ENCODE measurements at regions of chrX and their contacts with region 1.

Region 1: GRCh38 chrX:54891573-54891972 is 29.1 kb upstream of the TRO start:
- DNase-seq: peak in 1 of 2 donors; percentile 32
- ATAC-seq: peak; percentile 72

Region 2: DNA sequence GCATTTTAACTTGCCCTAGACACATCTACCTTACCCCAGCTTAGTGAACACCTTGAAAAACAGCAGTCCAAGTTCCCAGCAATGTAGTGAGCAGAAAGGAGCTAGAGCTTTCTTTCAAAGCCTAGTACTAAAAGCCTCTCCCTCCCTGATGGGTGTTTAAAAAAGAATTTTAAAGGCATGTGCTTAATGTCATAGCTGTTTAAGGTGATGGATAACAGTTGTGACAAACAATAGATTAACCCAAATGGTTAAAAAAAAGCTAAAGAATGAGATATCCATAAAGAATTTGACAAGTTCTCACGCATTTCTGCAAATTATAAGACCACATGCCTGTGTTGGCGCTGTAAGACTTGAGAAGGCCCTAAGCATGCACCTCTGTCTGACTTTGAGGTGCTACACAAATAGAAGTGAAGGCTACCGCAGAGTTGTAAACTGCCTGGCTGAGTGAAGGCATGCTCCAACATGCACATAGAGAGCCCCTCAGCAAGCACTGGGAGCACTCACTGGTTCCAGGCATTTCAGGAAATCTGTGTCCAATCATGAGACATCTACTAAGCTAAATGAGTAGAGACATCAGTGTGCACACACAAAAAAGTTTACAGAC is 941.3 kb before region 1 on chrX:
- intact Hi-C with region 1: no loop called
- DNase-seq: no peak
- ATAC-seq: no peak

Region 3: GRCh38 chrX:55057675-55058249 is 166.2 kb after region 1 on chrX:
- intact Hi-C with region 1: loop called in 1 of 2 experiments (anchors 10 kb)
- DNase-seq: peak in 1 of 2 donors; percentile 13
- ATAC-seq: peak; percentile 75

Measured in left colon (tissue), 2 donors.